ENCODE measurements at regions of chr9 and their contacts with region 1.

Region 1: DNA sequence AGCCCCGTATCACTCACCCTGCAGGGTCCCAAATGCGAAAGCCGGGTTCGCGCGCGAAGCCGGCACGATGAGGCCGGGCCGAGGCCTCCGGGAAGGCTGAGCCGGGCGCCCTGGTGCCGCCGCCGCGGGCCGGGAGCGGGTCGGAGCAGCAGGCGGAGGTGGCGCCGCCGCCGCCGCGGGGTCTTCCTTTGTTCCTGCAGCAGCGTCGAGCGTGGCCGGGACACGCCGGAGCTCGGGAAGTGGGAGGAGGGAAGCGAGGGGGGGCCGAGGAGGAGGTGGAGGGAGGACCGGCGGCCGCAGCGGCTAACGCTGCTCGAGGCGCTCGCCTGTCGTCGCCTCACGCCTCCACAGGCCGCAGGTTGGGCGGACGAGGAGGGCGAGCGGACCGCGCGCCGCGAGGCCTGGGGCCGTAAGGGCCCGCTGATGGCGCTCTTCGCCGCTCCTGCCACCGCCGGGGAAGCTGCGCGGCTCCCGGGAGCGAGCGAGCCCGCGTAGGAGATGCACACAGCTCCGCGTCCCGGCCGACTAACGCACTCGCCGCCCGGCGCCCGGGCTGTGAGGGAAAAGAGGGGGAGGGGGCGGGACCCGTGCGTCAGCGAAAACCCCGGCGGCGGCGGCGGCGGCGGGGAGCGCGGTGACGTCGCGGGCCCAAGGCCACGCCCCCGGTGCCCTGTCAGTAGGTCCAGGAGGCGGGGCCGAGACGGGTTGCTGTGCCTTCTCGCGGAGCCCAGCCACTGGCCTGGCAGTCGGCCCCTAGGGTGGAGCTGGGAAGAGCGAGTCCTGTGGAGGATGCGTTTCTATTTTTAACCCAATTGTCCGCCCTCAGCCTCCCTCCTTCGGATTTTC is at the start of gene ZFAND5:
- DNase-seq: peak; percentile 86 to 98 (median 94)
- ATAC-seq: peak; percentile 79
- H3K4me3 ChIP-seq: peak within 1 kb of the TSS; percentile 74 to 88
- H3K4me3 Mint-ChIP-seq: peak within 1 kb of the TSS; percentile 91
- H3K27ac ChIP-seq: peak within 1 kb of the TSS; percentile 95 to 97
- H3K27ac Mint-ChIP-seq: peak within 1 kb of the TSS; percentile 98
- H3K4me1 ChIP-seq: peaks cover 41% of the 10 kb centered on the region
- H3K4me1 Mint-ChIP-seq: peaks cover 41% of the 10 kb centered on the region
- H3K27me3 ChIP-seq: no peaks in the 10 kb centered on the region
- H3K27me3 Mint-ChIP-seq: no peaks in the 10 kb centered on the region
- CTCF ChIP-seq: no peak
- total RNA-seq, gene ZFAND5: 355 to 361 TPM

Region 2: DNA sequence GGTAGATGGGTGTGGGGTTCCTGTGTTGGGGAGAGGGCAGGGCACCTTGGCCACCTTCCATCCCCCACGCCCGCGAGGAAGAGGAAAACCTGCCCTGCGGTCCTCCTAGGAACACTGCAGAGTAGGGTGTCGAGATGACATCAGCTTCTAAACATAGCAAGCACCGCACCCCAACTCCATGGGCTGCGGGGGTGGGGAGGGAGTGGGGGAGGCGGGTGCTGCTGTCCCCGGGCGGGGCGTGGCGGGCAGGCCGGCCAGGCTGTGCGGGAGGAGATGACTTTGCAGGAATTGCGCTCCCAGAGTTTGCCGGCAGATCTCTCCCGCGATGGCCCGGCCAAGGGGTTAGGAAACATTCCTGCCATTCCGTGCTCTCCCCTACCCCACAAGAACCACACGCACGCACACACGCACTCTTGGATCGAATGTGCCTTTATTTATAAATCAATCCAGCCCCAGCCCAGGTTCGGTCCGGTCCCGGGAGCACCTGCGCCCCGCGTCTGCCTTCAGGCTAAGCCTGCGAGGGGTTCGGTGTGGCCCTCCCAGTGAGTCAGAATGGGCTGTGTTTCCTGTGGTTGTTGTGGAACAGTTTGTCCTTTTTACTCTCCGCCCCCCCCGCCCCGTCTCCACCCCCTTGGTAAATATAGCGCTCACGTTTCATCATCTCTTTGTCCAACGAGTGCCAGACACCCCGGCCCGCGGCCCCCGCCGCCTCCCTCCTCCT is 1945.2 kb before region 1 on chr9:
- CTCF ChIA-PET with region 1: no interaction called
- POLR2A ChIA-PET with region 1: no interaction called
- intact Hi-C with region 1: loop called in 1 of 2 experiments (anchors 10 kb)
- DNase-seq: peak; percentile 77 to 94 (median 86)
- ATAC-seq: peak; percentile 56
- H3K4me3 ChIP-seq: peak overlapping the region; percentile 73 to 79
- H3K4me3 Mint-ChIP-seq: peak overlapping the region; percentile 95
- H3K27ac ChIP-seq: peak overlapping the region; percentile 95 to 97
- H3K27ac Mint-ChIP-seq: peak overlapping the region; percentile 100
- H3K4me1 ChIP-seq: peaks cover 42% of the 10 kb centered on the region
- H3K4me1 Mint-ChIP-seq: peaks cover 51% of the 10 kb centered on the region
- H3K27me3 ChIP-seq: no peaks in the 10 kb centered on the region
- H3K27me3 Mint-ChIP-seq: no peaks in the 10 kb centered on the region
- CTCF ChIP-seq: no peak

Region 3: GRCh38 chr9:71911253-71912074 is 453.4 kb before region 1 on chr9 and contains the start of gene C9orf85:
- CTCF ChIA-PET with region 1: no interaction called
- POLR2A ChIA-PET with region 1: interaction called, 3 read pairs
- intact Hi-C with region 1: loop called (anchors 2 to 5 kb)
- DNase-seq: peak; percentile 91 to 99 (median 96)
- ATAC-seq: peak; percentile 93
- H3K4me3 ChIP-seq: peak within 1 kb of the TSS; percentile 80 to 89
- H3K4me3 Mint-ChIP-seq: peak within 1 kb of the TSS; percentile 99
- H3K27ac ChIP-seq: peak within 1 kb of the TSS; percentile 63 to 84
- H3K27ac Mint-ChIP-seq: peak within 1 kb of the TSS; percentile 96
- H3K4me1 ChIP-seq: peaks cover 26% of the 10 kb centered on the region
- H3K4me1 Mint-ChIP-seq: peaks cover 71% of the 10 kb centered on the region
- H3K27me3 ChIP-seq: no peaks in the 10 kb centered on the region
- H3K27me3 Mint-ChIP-seq: no peaks in the 10 kb centered on the region
- CTCF ChIP-seq: no peak
- total RNA-seq, gene C9orf85: 3.1 to 4.0 TPM

Region 4: GRCh38 chr9:72443855-72444254 is 79.0 kb after region 1 on chr9:
- CTCF ChIA-PET with region 1: no interaction called
- POLR2A ChIA-PET with region 1: interaction called, 8 read pairs
- intact Hi-C with region 1: loop called in 1 of 2 experiments (anchors 2 kb)
- DNase-seq: peak in 3 of 9 experiments; percentile 5 to 51 (median 31)
- ATAC-seq: peak; percentile 64
- H3K4me3 ChIP-seq: no peak overlapping the region
- H3K4me3 Mint-ChIP-seq: no peak overlapping the region
- H3K27ac ChIP-seq: peak overlapping the region in 1 of 2 experiments; percentile 24
- H3K27ac Mint-ChIP-seq: peak overlapping the region; percentile 3
- H3K4me1 ChIP-seq: no peaks in the 10 kb centered on the region
- H3K4me1 Mint-ChIP-seq: peaks cover 12% of the 10 kb centered on the region
- H3K27me3 ChIP-seq: no peaks in the 10 kb centered on the region
- H3K27me3 Mint-ChIP-seq: peaks cover 2% of the 10 kb centered on the region
- CTCF ChIP-seq: no peak

Region 5: DNA sequence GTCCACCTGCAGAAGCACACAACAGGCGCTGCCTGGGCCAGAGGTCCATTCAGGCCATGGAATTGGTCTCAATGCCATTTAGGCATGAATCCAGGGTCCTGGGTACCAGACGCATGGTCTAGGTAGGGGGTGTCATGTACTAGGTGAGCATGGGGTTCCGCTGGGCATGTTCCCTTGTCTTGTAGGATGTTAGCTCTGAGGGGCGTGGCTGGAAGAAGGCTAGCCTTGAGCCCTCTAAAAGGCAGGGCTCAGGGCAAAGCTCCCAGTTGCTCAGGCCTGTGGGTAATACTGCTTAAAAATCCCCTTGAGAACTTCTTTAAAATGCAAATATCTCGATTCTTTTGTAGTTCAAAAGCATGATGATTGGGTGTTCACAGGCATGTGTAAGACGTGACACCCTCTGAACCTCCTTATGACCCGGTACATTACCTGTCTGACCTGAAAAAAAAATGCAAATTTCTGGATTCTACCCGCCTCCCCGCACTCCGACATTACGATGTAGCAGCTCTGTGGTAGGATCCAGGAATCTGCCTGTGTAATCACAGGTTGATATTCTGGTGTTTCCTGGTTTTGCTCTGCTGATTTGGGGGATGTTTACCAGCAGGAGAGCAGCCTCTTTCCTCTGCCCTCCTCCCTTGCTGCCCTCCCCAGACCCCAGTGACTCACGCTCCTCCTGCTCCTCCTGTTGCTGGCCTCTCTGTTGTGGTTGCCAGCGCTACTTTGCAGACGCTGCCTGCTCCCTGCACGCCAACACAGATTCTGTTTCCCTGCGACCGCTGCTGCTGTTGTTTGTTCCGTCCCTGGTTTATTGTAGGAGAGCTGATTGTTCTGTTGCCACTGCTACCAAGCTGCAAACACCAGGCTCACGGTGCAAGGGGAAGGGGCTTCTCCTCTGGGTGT is 162.2 kb after region 1 on chr9:
- CTCF ChIA-PET with region 1: no interaction called
- POLR2A ChIA-PET with region 1: interaction called, 10 read pairs
- intact Hi-C with region 1: loop called (anchors 1 kb)
- DNase-seq: peak; percentile 45 to 88 (median 82)
- ATAC-seq: peak; percentile 86
- H3K4me3 ChIP-seq: peak overlapping the region; percentile 32 to 43
- H3K4me3 Mint-ChIP-seq: peak overlapping the region; percentile 86
- H3K27ac ChIP-seq: peak overlapping the region; percentile 43 to 66
- H3K27ac Mint-ChIP-seq: peak overlapping the region; percentile 94
- H3K4me1 ChIP-seq: peaks cover 18% of the 10 kb centered on the region
- H3K4me1 Mint-ChIP-seq: peaks cover 30% of the 10 kb centered on the region
- H3K27me3 ChIP-seq: no peaks in the 10 kb centered on the region
- H3K27me3 Mint-ChIP-seq: no peaks in the 10 kb centered on the region
- CTCF ChIP-seq: no peak

Region 6: GRCh38 chr9:72656021-72656420 is 291.1 kb after region 1 on chr9:
- CTCF ChIA-PET with region 1: no interaction called
- POLR2A ChIA-PET with region 1: no interaction called
- intact Hi-C with region 1: no loop called
- DNase-seq: no peak
- ATAC-seq: no peak
- H3K4me3 ChIP-seq: no peak overlapping the region
- H3K4me3 Mint-ChIP-seq: no peak overlapping the region
- H3K27ac ChIP-seq: no peak overlapping the region
- H3K27ac Mint-ChIP-seq: no peak overlapping the region
- H3K4me1 ChIP-seq: no peaks in the 10 kb centered on the region
- H3K4me1 Mint-ChIP-seq: no peaks in the 10 kb centered on the region
- H3K27me3 ChIP-seq: peaks cover 2% of the 10 kb centered on the region in 2 experiments
- H3K27me3 Mint-ChIP-seq: peaks cover 19% of the 10 kb centered on the region
- CTCF ChIP-seq: no peak

Region 7: GRCh38 chr9:72843520-72844439 is 478.9 kb after region 1 on chr9:
- CTCF ChIA-PET with region 1: no interaction called
- POLR2A ChIA-PET with region 1: no interaction called
- intact Hi-C with region 1: no loop called
- DNase-seq: no peak
- ATAC-seq: no peak
- H3K4me3 ChIP-seq: no peak overlapping the region
- H3K4me3 Mint-ChIP-seq: no peak overlapping the region
- H3K27ac ChIP-seq: no peak overlapping the region
- H3K27ac Mint-ChIP-seq: no peak overlapping the region
- H3K4me1 ChIP-seq: no peaks in the 10 kb centered on the region
- H3K4me1 Mint-ChIP-seq: no peaks in the 10 kb centered on the region
- H3K27me3 ChIP-seq: no peaks in the 10 kb centered on the region
- H3K27me3 Mint-ChIP-seq: peaks cover 4% of the 10 kb centered on the region
- CTCF ChIP-seq: no peak

Region 8: GRCh38 chr9:73132034-73132776 is 767.3 kb after region 1 on chr9:
- CTCF ChIA-PET with region 1: no interaction called
- POLR2A ChIA-PET with region 1: interaction called, 3 read pairs
- intact Hi-C with region 1: loop called (anchors 1 to 10 kb)
- DNase-seq: peak; percentile 51 to 92 (median 72)
- ATAC-seq: peak; percentile 90
- H3K4me3 ChIP-seq: peak overlapping the region; percentile 57 to 65
- H3K4me3 Mint-ChIP-seq: peak overlapping the region; percentile 87
- H3K27ac ChIP-seq: peak overlapping the region; percentile 87 to 94
- H3K27ac Mint-ChIP-seq: peak overlapping the region; percentile 95
- H3K4me1 ChIP-seq: peaks cover 7% of the 10 kb centered on the region
- H3K4me1 Mint-ChIP-seq: peaks cover 25% of the 10 kb centered on the region
- H3K27me3 ChIP-seq: no peaks in the 10 kb centered on the region
- H3K27me3 Mint-ChIP-seq: no peaks in the 10 kb centered on the region
- CTCF ChIP-seq: no peak

Measured in CD8-positive, alpha-beta T cell (primary cell).